ENCODE measurements at regions of chr19 and their contacts with region 1.

Region 1: DNA sequence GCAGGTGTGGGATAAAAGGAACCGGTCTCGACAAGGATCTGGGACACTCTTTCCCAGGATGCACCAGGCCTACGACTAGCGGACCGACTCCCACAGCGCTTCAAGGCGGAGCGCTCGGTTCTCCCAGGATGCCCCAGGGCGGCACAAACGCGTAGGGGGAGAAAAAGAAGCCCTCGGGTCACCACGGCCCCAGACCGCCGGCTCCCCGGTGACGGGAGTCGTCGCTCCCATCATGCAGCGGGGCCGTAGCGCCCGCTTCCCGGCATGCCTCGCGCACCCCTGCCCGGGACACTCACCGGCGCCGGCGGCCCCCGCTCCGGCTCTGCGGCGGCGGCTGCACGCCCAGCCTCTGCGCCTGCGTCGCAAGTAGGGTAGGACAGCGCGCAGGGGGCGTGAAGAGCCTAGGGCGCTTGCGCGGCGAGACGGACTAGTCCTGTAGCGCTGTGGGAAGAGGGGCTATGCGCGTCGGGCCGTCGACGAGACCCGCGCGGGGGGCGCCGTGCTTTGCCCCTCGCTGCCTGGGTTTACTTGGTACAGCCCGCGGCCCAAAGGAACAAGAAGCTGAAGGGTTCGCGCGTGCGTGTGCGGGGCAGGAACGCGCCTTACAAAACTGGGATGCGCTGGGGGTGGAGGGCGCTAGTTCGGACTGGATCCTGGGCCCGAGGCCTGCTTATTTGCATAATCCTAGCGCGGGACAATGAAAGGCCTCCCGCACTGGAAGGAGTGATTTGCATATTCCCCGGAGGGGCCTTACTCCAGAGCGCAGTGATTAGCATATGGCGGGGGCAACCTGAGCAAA is at the start of gene ZNF428:
- DNase-seq: peak; percentile 92
- ATAC-seq: peak; percentile 86
- H3K4me3 ChIP-seq: peak within 1 kb of the TSS; percentile 54 to 86 (median 80)
- H3K4me3 Mint-ChIP-seq: peak within 1 kb of the TSS; percentile 98
- H3K27ac ChIP-seq: peak within 1 kb of the TSS; percentile 84 to 88
- H3K27ac Mint-ChIP-seq: peak within 1 kb of the TSS; percentile 99
- H3K4me1 ChIP-seq: peaks cover 14 to 15% of the 10 kb centered on the region in 2 donors
- H3K4me1 Mint-ChIP-seq: peaks cover 27% of the 10 kb centered on the region
- H3K27me3 ChIP-seq: no peaks in the 10 kb centered on the region
- H3K27me3 Mint-ChIP-seq: no peaks in the 10 kb centered on the region
- CTCF ChIP-seq: no peak
- total RNA-seq, gene ZNF428: 19.7 and 24.6 TPM in 2 replicates

Region 2: GRCh38 chr19:43463381-43464136 is 155.9 kb before region 1 on chr19:
- CTCF ChIA-PET with region 1: no interaction called
- POLR2A ChIA-PET with region 1: no interaction called
- intact Hi-C with region 1: loop called (anchors 1 kb)
- DNase-seq: peak; percentile 98
- ATAC-seq: peak; percentile 92
- H3K4me3 ChIP-seq: peak overlapping the region; percentile 13 to 96 (median 77)
- H3K4me3 Mint-ChIP-seq: peak overlapping the region; percentile 97
- H3K27ac ChIP-seq: peak overlapping the region; percentile 30 to 40
- H3K27ac Mint-ChIP-seq: peak overlapping the region; percentile 85
- H3K4me1 ChIP-seq: peaks cover 8 to 14% of the 10 kb centered on the region in 2 donors
- H3K4me1 Mint-ChIP-seq: peaks cover 15% of the 10 kb centered on the region
- H3K27me3 ChIP-seq: peaks cover 0 to 12% (median 5%) of the 10 kb centered on the region in 4 experiments
- H3K27me3 Mint-ChIP-seq: peaks cover 4% of the 10 kb centered on the region
- CTCF ChIP-seq: no peak

Region 3: GRCh38 chr19:43544077-43544476 is 75.4 kb before region 1 on chr19:
- CTCF ChIA-PET with region 1: no interaction called
- POLR2A ChIA-PET with region 1: no interaction called
- intact Hi-C with region 1: no loop called
- DNase-seq: no peak
- ATAC-seq: no peak
- H3K4me3 ChIP-seq: no peak overlapping the region
- H3K4me3 Mint-ChIP-seq: no peak overlapping the region
- H3K27ac ChIP-seq: no peak overlapping the region
- H3K27ac Mint-ChIP-seq: no peak overlapping the region
- H3K4me1 ChIP-seq: no peaks in the 10 kb centered on the region
- H3K4me1 Mint-ChIP-seq: no peaks in the 10 kb centered on the region
- H3K27me3 ChIP-seq: no peaks in the 10 kb centered on the region
- H3K27me3 Mint-ChIP-seq: no peaks in the 10 kb centered on the region
- CTCF ChIP-seq: no peak

Region 4: DNA sequence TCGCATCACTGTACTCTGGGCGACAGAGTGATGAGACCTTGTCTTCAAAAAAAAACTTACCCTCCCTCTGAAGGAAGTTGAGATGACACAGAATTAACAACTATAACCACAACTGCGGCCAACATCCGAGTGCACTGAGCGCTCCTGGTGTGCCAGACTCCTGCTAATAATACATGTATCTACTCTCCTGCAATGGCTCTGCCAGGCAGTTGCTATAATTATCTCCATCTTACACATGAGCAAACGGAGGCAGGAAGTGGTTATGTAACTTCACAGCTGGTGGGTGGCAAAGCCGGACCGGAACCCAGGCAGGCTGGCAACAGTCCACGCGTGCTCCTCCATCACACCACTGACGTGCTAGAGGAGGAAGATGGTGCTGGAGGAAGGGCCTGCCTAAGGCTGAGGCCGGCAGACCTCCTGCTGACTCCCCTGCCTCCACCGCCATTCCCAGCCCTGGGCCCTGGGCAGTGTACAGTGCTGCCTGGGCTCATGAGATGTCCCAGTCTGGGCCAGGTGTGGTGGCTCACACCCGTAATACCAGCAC is 56.7 kb before region 1 on chr19:
- CTCF ChIA-PET with region 1: no interaction called
- POLR2A ChIA-PET with region 1: interaction called, 3 read pairs
- intact Hi-C with region 1: loop called (anchors 1 kb)
- DNase-seq: peak; percentile 93
- ATAC-seq: peak; percentile 85
- H3K4me3 ChIP-seq: peak overlapping the region in 3 of 5 experiments; percentile 7 to 45 (median 11)
- H3K4me3 Mint-ChIP-seq: peak overlapping the region; percentile 68
- H3K27ac ChIP-seq: peak overlapping the region; percentile 92
- H3K27ac Mint-ChIP-seq: peak overlapping the region; percentile 99
- H3K4me1 ChIP-seq: peaks cover 42 to 52% of the 10 kb centered on the region in 2 donors
- H3K4me1 Mint-ChIP-seq: peaks cover 56% of the 10 kb centered on the region
- H3K27me3 ChIP-seq: no peaks in the 10 kb centered on the region
- H3K27me3 Mint-ChIP-seq: no peaks in the 10 kb centered on the region
- CTCF ChIP-seq: no peak

Region 5: DNA sequence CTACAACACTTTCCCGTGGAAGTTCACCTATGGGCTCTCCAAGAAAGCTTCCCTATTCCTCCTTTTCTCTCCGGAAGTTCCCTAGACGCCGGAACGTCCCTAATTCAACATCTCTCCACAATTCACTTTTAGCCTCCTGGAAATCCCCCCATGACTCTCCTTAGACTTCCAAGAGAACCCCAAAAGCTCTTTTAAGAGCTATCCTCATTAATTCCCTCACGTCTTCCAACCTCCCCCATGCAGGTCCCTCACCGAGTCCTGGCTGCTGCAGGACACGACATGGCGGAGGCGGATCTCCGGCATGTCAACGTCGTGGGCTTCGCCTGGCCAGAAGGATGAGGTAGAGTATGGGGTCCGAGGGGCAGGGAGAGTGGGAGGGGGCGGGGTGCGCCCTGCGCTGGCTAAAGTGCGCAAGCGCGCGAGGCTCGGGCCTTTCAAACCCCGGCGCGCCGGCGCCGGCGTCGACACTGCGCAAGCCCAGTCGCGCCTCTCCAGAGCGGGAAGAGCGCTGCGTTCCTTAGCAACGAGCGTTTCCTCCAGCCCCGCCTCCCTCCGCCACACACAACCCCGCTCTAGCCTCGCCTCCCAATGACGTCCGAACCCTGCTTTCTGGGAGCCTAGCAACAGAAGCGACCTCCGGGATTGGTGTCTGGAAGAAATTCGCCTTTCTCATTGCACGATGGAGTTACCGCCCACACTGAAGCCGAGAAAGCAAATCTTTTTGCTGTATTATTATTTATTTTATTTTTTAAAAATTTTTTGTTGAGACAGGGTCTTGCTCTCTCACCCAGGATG is 44.1 kb before region 1 on chr19 and contains the starts of genes PINLYP and XRCC1:
- CTCF ChIA-PET with region 1: no interaction called
- POLR2A ChIA-PET with region 1: no interaction called
- intact Hi-C with region 1: loop called (anchors 1 kb)
- DNase-seq: peak; percentile 99
- ATAC-seq: peak; percentile 99
- H3K4me3 ChIP-seq: peak within 1 kb of the TSS; percentile 67 to 98 (median 82)
- H3K4me3 Mint-ChIP-seq: peak within 1 kb of the TSS; percentile 97
- H3K27ac ChIP-seq: peak within 1 kb of the TSS; percentile 74 to 89
- H3K27ac Mint-ChIP-seq: peak within 1 kb of the TSS; percentile 92
- H3K4me1 ChIP-seq: peaks cover 16 to 29% of the 10 kb centered on the region in 2 donors
- H3K4me1 Mint-ChIP-seq: peaks cover 42% of the 10 kb centered on the region
- H3K27me3 ChIP-seq: no peaks in the 10 kb centered on the region
- H3K27me3 Mint-ChIP-seq: no peaks in the 10 kb centered on the region
- CTCF ChIP-seq: no peak
- total RNA-seq, gene PINLYP: 0.97 and 2.9 TPM in 2 replicates
- total RNA-seq, gene XRCC1: 38.2 and 47.4 TPM in 2 replicates

Region 6: GRCh38 chr19:43639519-43640423 is 20.3 kb after region 1 on chr19 and contains the start of gene CADM4:
- CTCF ChIA-PET with region 1: no interaction called
- POLR2A ChIA-PET with region 1: no interaction called
- intact Hi-C with region 1: loop called (anchors 2 kb)
- DNase-seq: peak; percentile 73
- ATAC-seq: peak; percentile 87
- H3K4me3 ChIP-seq: peak within 1 kb of the TSS in 4 of 5 experiments; percentile 40 to 62 (median 56)
- H3K4me3 Mint-ChIP-seq: peak within 1 kb of the TSS; percentile 80
- H3K27ac ChIP-seq: no peak within 1 kb of the TSS
- H3K27ac Mint-ChIP-seq: peak within 1 kb of the TSS; percentile 16
- H3K4me1 ChIP-seq: peaks cover 20 to 26% of the 10 kb centered on the region in 2 donors
- H3K4me1 Mint-ChIP-seq: peaks cover 25% of the 10 kb centered on the region
- H3K27me3 ChIP-seq: peaks cover 0 to 50% (median 18%) of the 10 kb centered on the region in 4 experiments
- H3K27me3 Mint-ChIP-seq: peaks cover 35% of the 10 kb centered on the region
- CTCF ChIP-seq: no peak
- total RNA-seq, gene CADM4: 0.42 and 1.1 TPM in 2 replicates

Region 7: GRCh38 chr19:43668406-43669158 is 49.1 kb after region 1 on chr19:
- CTCF ChIA-PET with region 1: interaction called, 6 read pairs
- POLR2A ChIA-PET with region 1: interaction called, 4 read pairs
- intact Hi-C with region 1: loop called (anchors 1 kb)
- DNase-seq: peak; percentile 92
- ATAC-seq: peak; percentile 85
- H3K4me3 ChIP-seq: peak overlapping the region; percentile 35 to 79 (median 59)
- H3K4me3 Mint-ChIP-seq: peak overlapping the region; percentile 84
- H3K27ac ChIP-seq: no peak overlapping the region
- H3K27ac Mint-ChIP-seq: peak overlapping the region; percentile 39
- H3K4me1 ChIP-seq: peaks cover 35 to 42% of the 10 kb centered on the region in 2 donors
- H3K4me1 Mint-ChIP-seq: peaks cover 37% of the 10 kb centered on the region
- H3K27me3 ChIP-seq: peaks cover 0 to 27% (median 7%) of the 10 kb centered on the region in 4 experiments
- H3K27me3 Mint-ChIP-seq: peaks cover 14% of the 10 kb centered on the region
- CTCF ChIP-seq: no peak

Region 8: DNA sequence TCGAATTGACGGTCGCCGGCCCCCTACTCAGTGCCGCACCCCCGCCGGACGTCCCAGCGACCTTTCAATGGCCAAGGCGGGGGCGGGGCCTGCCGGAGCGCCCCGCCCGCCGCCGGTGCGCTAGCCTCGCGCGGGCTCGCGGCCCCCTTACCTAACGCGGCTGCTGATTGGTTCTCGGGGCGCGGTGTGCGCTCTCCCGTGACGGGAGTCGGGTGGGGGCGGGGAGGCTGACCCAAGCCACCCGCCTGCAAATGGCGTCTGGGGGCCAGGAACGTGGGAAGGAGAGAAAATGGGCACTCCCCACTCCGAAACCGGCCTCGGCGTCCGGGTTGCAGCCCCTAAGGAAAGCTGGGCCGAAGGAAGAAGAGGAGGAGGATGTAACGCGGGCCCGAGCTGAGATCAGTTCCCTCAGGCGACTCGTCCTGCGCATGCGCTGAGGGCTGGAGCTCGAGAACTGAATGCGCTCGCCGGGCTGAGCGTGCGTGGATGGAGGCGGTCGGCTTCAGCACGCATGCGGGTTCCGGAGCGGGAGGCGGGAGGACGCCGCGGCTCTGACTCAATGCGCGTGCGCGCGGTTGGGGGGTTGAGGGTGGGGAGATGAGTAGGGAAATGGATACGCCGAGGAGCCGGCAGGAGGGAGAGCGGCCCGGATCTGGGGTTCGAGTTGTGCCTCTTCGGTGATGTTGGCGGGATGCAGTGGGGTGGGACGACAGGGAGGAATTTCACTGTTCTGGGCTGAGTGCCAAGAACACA is 135.2 kb after region 1 on chr19 and contains the start of gene SMG9:
- CTCF ChIA-PET with region 1: no interaction called
- POLR2A ChIA-PET with region 1: no interaction called
- intact Hi-C with region 1: loop called (anchors 1 kb)
- DNase-seq: peak; percentile 99
- ATAC-seq: peak; percentile 81
- H3K4me3 ChIP-seq: peak within 1 kb of the TSS; percentile 63 to 88 (median 84)
- H3K4me3 Mint-ChIP-seq: peak within 1 kb of the TSS; percentile 99
- H3K27ac ChIP-seq: peak within 1 kb of the TSS; percentile 93 to 98
- H3K27ac Mint-ChIP-seq: peak within 1 kb of the TSS; percentile 100
- H3K4me1 ChIP-seq: peaks cover 27 to 58% of the 10 kb centered on the region in 2 donors
- H3K4me1 Mint-ChIP-seq: peaks cover 71% of the 10 kb centered on the region
- H3K27me3 ChIP-seq: no peaks in the 10 kb centered on the region
- H3K27me3 Mint-ChIP-seq: no peaks in the 10 kb centered on the region
- CTCF ChIP-seq: no peak
- total RNA-seq, gene SMG9: 87.5 and 89.9 TPM in 2 replicates

Measured in B cell (primary cell).